ENCODE measurements at regions of chr1 and their contacts with region 1.

Region 1: GRCh38 chr1:160951443-160952128 is 3.0 kb downstream of the ITLN2 start:
- DNase-seq: peak; percentile 40
- H3K4me3 ChIP-seq: no peak overlapping the region
- H3K27ac ChIP-seq: no peak overlapping the region
- H3K4me1 ChIP-seq: peaks cover 33% of the 10 kb centered on the region
- H3K27me3 ChIP-seq: peaks cover 3% of the 10 kb centered on the region
- CTCF ChIP-seq: peak; percentile 66

Region 2: GRCh38 chr1:160726498-160727315 is 224.9 kb before region 1 on chr1:
- intact Hi-C with region 1: loop called (anchors 10 kb)
- DNase-seq: no peak
- H3K4me3 ChIP-seq: no peak overlapping the region
- H3K27ac ChIP-seq: no peak overlapping the region
- H3K4me1 ChIP-seq: peaks cover 6% of the 10 kb centered on the region
- H3K27me3 ChIP-seq: peaks cover 8% of the 10 kb centered on the region
- CTCF ChIP-seq: peak; percentile 81

Region 3: GRCh38 chr1:160830321-160831153 is 121.0 kb before region 1 on chr1:
- intact Hi-C with region 1: loop called (anchors 10 kb)
- DNase-seq: no peak
- H3K4me3 ChIP-seq: no peak overlapping the region
- H3K27ac ChIP-seq: no peak overlapping the region
- H3K4me1 ChIP-seq: no peaks in the 10 kb centered on the region
- H3K27me3 ChIP-seq: peaks cover 30% of the 10 kb centered on the region
- CTCF ChIP-seq: peak; percentile 65

Region 4: DNA sequence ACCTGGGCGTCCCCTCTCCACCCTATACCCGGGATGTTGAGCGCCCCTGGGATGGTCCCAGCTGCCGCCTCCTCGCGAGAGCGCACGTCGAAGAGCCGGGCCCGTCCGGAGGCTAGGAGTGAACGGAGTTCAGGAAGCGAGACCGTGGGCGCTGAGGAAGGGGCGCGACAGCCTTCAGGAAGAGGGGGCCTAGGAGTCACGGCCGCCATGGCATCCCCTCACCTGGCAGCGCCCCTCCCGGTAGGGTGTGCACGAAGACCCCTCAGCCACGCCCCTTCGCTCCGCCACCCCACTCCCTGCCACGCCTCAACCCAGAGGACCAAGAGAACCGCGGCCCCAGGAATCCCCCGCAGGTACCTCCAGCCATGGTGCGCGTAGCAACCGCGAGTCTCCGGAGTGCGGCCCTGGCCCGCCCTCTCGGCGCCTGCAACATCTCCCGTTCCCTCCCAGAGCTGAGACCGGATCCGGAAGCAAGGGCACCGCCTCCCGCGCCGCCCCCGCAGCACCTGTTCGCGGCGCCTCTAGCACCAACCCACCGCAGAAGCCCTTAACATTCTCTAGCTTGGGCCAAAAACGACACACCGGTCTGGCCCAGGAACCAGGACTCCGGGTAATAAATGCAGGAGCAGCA is 87.1 kb after region 1 on chr1 and contains the start of gene TSTD1:
- intact Hi-C with region 1: no loop called
- DNase-seq: peak; percentile 52
- H3K4me3 ChIP-seq: peak within 1 kb of the TSS; percentile 68
- H3K27ac ChIP-seq: peak within 1 kb of the TSS; percentile 12
- H3K4me1 ChIP-seq: peaks cover 24% of the 10 kb centered on the region
- H3K27me3 ChIP-seq: no peaks in the 10 kb centered on the region
- CTCF ChIP-seq: no peak
- total RNA-seq, gene TSTD1: 13.4 TPM